ENCODE measurements at regions of chr22 and their contacts with region 1.

Region 1: GRCh38 chr22:48167238-48167637 is 1404.8 kb downstream of the TBC1D22A start:
- DNase-seq: no peak
- ATAC-seq: no peak
- H3K4me3 ChIP-seq: no peak overlapping the region
- H3K27ac ChIP-seq: no peak overlapping the region
- H3K4me1 ChIP-seq: no peaks in the 10 kb centered on the region
- H3K27me3 ChIP-seq: no peaks in the 10 kb centered on the region
- CTCF ChIP-seq: no peak
- POLR2A ChIP-seq: no peak

Region 2: GRCh38 chr22:48103126-48103875 is 63.9 kb before region 1 on chr22:
- intact Hi-C with region 1: loop called in 1 of 10 experiments (anchors 10 kb)
- DNase-seq: no peak
- ATAC-seq: no peak
- H3K4me3 ChIP-seq: no peak overlapping the region
- H3K27ac ChIP-seq: no peak overlapping the region
- H3K4me1 ChIP-seq: no peaks in the 10 kb centered on the region
- H3K27me3 ChIP-seq: peaks cover 0 to 33% (median 8%) of the 10 kb centered on the region in 9 donors
- CTCF ChIP-seq: no peak
- POLR2A ChIP-seq: no peak